Mammary epithelial cell (primary cell): ENCODE measurements at regions of chrX and their contacts with region 1.

Region 1: DNA sequence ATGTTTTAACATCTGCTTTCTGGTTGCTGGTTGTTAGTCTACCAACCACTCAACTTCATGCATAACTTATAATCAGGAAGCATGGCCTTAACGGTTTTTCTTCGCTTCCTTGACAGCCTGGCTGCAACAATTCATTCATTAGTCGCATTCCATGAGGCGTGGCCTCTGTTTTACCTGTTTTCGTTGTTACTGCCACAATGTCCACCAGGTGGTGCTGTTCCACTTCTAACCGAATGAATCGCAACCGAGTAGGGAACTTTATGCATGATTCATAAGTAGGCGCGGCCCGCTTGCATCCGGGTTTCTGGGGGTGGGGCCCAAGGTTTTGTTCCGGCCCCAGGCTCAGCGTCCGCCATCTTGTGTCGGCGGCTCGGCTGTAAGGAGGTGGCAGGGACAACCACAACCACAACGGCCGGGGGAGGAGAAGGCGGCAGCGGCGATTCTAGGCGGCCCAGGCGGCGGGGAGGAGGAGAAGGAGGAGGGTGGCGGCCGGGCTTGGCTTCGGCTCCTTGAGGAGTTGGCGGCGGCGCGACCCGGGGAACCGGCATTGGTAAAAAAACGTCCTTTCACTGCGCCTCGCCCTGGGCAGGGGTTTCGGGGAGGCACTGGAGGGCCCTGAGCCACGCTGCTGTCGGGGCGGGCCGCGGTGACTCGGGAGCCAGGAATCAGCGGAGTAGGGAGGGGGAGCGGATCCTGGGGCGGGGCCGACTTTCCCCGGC is at the start of gene UBA1:
- DNase-seq: peak; percentile 96
- H3K4me3 ChIP-seq: peak within 1 kb of the TSS; percentile 74 to 92 (median 76)
- H3K27ac ChIP-seq: peak within 1 kb of the TSS; percentile 81
- H3K4me1 ChIP-seq: peaks cover 44% of the 10 kb centered on the region
- H3K27me3 ChIP-seq: no peaks in the 10 kb centered on the region
- CTCF ChIP-seq: peak; percentile 79 to 87
- total RNA-seq, gene UBA1: 231 to 360 TPM

Region 2: GRCh38 chrX:47144626-47145394 is 48.8 kb before region 1 on chrX and contains the starts of genes NDUFB11 and RBM10:
- CTCF ChIA-PET with region 1: no interaction called
- dilution Hi-C with region 1: no loop called
- in situ Hi-C with region 1: no loop called
- intact Hi-C with region 1: loop called (anchors 2 kb)
- DNase-seq: peak; percentile 91
- H3K4me3 ChIP-seq: peak within 1 kb of the TSS; percentile 64 to 79 (median 65)
- H3K27ac ChIP-seq: peak within 1 kb of the TSS; percentile 78
- H3K4me1 ChIP-seq: peaks cover 9% of the 10 kb centered on the region
- H3K27me3 ChIP-seq: no peaks in the 10 kb centered on the region
- CTCF ChIP-seq: peak; percentile 37 to 61
- total RNA-seq, gene NDUFB11: 42.3 to 57.2 TPM
- total RNA-seq, gene RBM10: 33.3 to 42.1 TPM

Region 3: GRCh38 chrX:47311932-47312774 is 118.5 kb after region 1 on chrX:
- CTCF ChIA-PET with region 1: interaction called, 4 read pairs
- dilution Hi-C with region 1: no loop called
- in situ Hi-C with region 1: no loop called
- intact Hi-C with region 1: loop called (anchors 1 kb)
- DNase-seq: peak; percentile 62
- H3K4me3 ChIP-seq: no peak overlapping the region
- H3K27ac ChIP-seq: no peak overlapping the region
- H3K4me1 ChIP-seq: no peaks in the 10 kb centered on the region
- H3K27me3 ChIP-seq: no peaks in the 10 kb centered on the region
- CTCF ChIP-seq: peak; percentile 50 to 72

Region 4: DNA sequence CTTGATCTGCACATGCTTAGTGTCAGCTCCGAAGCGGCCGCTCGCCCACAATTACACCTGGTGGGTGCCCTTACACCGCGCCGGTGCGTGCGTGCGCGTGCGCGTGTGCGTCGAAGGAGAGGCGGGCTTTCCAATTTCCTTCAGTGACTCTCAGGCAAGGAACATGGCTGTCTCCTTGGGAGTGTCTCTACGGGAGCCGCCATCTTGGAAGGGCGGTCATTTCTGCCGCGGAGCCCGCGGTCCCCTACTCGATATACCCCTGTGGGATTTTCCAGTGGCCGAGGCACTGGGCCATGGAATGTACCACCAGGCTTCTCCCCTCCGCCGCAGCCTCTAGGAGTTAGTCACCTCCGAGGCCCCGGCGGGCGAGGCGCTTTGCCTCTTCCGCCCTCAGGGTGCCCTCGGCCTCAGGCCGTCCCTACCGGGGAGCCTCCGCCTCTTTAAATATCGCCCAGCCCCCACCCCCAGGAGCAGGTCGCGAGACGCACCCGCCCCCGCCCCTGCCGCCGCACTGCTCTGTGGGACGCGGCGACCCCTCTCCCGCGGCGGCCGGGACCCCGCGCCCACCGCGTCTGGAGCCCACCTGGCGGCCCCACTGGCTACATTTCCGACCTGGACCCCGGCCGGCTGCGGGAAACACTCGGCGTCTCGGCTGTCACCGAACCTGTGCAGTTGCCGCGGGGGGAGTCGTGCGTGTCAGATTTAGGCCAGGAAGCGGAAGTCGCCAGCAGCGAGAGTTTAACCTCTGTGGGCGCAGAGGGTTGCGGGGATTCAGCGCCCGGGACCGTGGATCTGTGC is 289.1 kb after region 1 on chrX and contains the start of gene ZNF41:
- CTCF ChIA-PET with region 1: no interaction called
- dilution Hi-C with region 1: no loop called
- in situ Hi-C with region 1: no loop called
- intact Hi-C with region 1: loop called (anchors 1 kb)
- DNase-seq: peak; percentile 86
- H3K4me3 ChIP-seq: peak within 1 kb of the TSS; percentile 62 to 71 (median 70)
- H3K27ac ChIP-seq: peak within 1 kb of the TSS; percentile 48
- H3K4me1 ChIP-seq: no peaks in the 10 kb centered on the region
- H3K27me3 ChIP-seq: no peaks in the 10 kb centered on the region
- CTCF ChIP-seq: no peak
- total RNA-seq, gene ZNF41: 6.0 to 9.5 TPM

Region 5: DNA sequence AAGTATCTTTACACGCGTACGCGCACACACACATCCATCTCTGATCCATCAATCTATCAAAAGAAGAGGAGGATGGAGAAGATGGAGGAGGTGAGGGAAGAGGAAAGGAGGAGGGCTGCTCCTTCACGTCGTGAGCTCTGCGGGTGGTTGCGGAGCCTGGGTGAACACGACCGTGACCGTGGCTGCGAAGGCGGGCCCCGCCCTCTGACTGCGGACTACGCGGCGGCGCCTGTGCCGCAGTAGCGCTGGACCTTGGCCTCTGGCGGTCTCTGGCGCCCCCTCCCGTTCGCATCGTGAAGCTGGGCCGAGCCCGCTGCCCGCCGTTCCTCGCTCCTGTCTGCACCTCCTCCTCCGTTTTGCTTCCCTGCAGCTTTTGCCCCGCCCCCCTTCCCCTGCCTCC is 329.7 kb after region 1 on chrX:
- CTCF ChIA-PET with region 1: no interaction called
- dilution Hi-C with region 1: loop called (anchors 10 kb)
- in situ Hi-C with region 1: no loop called
- intact Hi-C with region 1: loop called (anchors 1 kb)
- DNase-seq: peak; percentile 36
- H3K4me3 ChIP-seq: peak overlapping the region; percentile 24 to 53 (median 48)
- H3K27ac ChIP-seq: no peak overlapping the region
- H3K4me1 ChIP-seq: peaks cover 3% of the 10 kb centered on the region
- H3K27me3 ChIP-seq: no peaks in the 10 kb centered on the region
- CTCF ChIP-seq: peak; percentile 50 to 78

Region 6: GRCh38 chrX:47722260-47722659 is 528.6 kb after region 1 on chrX:
- CTCF ChIA-PET with region 1: no interaction called
- dilution Hi-C with region 1: no loop called
- in situ Hi-C with region 1: no loop called
- intact Hi-C with region 1: no loop called
- DNase-seq: no peak
- H3K4me3 ChIP-seq: no peak overlapping the region
- H3K27ac ChIP-seq: no peak overlapping the region
- H3K4me1 ChIP-seq: no peaks in the 10 kb centered on the region
- H3K27me3 ChIP-seq: no peaks in the 10 kb centered on the region
- CTCF ChIP-seq: no peak